ENCODE measurements at regions of chr7 and their contacts with region 1.

Region 1: DNA sequence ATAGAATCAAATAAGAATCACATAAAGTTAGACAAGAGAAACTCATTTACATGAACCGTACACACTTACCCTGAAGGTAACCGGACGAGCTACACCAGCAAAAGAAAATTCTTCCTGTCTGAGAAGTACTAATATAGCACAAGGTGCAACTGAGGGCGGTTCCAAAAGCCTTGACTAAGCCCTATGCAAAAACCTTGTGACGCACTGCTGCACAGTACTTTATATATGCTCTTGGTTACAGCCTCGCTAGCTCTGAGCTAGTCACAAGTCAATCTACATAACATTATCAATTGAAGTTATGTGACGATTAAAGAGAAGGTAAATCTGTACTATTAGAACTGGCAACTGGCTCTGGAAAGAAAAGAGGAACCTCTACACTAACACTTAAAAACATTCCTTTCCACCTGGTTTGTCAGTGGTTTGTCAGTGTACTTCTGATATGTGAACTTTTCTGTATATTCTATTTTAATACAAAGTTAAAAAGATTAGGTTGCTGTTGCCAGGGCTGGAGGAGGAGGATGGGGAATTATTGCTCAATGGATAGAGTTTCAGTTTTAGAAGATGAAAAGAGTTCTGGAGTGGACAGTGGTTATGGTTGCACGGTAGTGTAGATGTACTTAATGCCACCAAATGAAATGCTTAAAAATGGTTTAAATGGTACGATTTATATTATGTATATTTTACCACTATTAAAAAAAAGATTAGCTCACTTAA is 21.6 kb downstream of the NT5C3A start:
- DNase-seq: peak; percentile 84
- H3K4me3 Mint-ChIP-seq: peak overlapping the region; percentile 69
- H3K27ac Mint-ChIP-seq: peak overlapping the region; percentile 86
- H3K4me1 Mint-ChIP-seq: peaks cover 47% of the 10 kb centered on the region
- H3K27me3 Mint-ChIP-seq: no peaks in the 10 kb centered on the region

Region 2: DNA sequence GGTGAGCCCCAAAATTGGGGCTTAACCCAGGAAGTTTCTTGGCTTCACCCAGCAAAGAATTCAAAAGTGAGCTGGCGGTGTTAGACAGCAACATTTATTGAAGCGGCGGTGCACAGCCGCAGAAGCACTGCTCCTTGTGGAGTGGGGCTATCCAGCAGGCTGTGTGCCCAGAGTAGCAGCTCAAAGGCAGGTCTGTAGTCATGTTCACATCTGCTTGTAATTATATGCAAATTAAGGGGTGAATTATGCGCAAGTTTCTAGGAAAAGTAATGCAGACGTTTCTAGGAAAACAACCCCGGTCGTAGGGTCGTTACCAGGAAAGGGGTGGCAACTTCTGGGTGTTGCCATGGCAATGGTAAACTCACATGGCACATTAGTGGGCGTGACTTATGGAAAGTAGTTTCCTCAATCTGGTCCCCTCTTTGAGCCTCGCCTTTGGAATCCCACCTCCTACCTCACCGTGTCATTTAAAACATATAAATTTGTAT is 135.7 kb before region 1 on chr7:
- CTCF ChIA-PET with region 1: interaction called, 3 read pairs
- intact Hi-C with region 1: loop called (anchors 1 kb)
- DNase-seq: peak; percentile 88
- H3K4me3 Mint-ChIP-seq: peak overlapping the region; percentile 70
- H3K27ac Mint-ChIP-seq: peak overlapping the region; percentile 87
- H3K4me1 Mint-ChIP-seq: peaks cover 18% of the 10 kb centered on the region
- H3K27me3 Mint-ChIP-seq: no peaks in the 10 kb centered on the region